B cell (primary cell): ENCODE measurements at regions of chr20 and their contacts with region 1.

Region 1: GRCh38 chr20:45368221-45368980 is 5.4 kb downstream of the SYS1 start:
- DNase-seq: peak; percentile 94
- ATAC-seq: peak; percentile 80
- H3K4me3 ChIP-seq: peak overlapping the region in 3 of 5 experiments; percentile 15 to 46 (median 18)
- H3K4me3 Mint-ChIP-seq: peak overlapping the region; percentile 86
- H3K27ac ChIP-seq: peak overlapping the region; percentile 43 to 94
- H3K27ac Mint-ChIP-seq: peak overlapping the region; percentile 92
- H3K4me1 ChIP-seq: peaks cover 95 to 98% of the 10 kb centered on the region in 2 donors
- H3K4me1 Mint-ChIP-seq: peaks cover 86% of the 10 kb centered on the region
- H3K27me3 ChIP-seq: no peaks in the 10 kb centered on the region
- H3K27me3 Mint-ChIP-seq: no peaks in the 10 kb centered on the region
- CTCF ChIP-seq: peak; percentile 28

Region 2: GRCh38 chr20:45187662-45188061 is 180.7 kb before region 1 on chr20:
- CTCF ChIA-PET with region 1: no interaction called
- POLR2A ChIA-PET with region 1: no interaction called
- intact Hi-C with region 1: no loop called
- DNase-seq: no peak
- ATAC-seq: no peak
- H3K4me3 ChIP-seq: no peak overlapping the region
- H3K4me3 Mint-ChIP-seq: no peak overlapping the region
- H3K27ac ChIP-seq: no peak overlapping the region
- H3K27ac Mint-ChIP-seq: no peak overlapping the region
- H3K4me1 ChIP-seq: no peaks in the 10 kb centered on the region
- H3K4me1 Mint-ChIP-seq: no peaks in the 10 kb centered on the region
- H3K27me3 ChIP-seq: peaks cover 0 to 7% (median 0%) of the 10 kb centered on the region in 4 experiments
- H3K27me3 Mint-ChIP-seq: peaks cover 23% of the 10 kb centered on the region
- CTCF ChIP-seq: no peak

Region 3: DNA sequence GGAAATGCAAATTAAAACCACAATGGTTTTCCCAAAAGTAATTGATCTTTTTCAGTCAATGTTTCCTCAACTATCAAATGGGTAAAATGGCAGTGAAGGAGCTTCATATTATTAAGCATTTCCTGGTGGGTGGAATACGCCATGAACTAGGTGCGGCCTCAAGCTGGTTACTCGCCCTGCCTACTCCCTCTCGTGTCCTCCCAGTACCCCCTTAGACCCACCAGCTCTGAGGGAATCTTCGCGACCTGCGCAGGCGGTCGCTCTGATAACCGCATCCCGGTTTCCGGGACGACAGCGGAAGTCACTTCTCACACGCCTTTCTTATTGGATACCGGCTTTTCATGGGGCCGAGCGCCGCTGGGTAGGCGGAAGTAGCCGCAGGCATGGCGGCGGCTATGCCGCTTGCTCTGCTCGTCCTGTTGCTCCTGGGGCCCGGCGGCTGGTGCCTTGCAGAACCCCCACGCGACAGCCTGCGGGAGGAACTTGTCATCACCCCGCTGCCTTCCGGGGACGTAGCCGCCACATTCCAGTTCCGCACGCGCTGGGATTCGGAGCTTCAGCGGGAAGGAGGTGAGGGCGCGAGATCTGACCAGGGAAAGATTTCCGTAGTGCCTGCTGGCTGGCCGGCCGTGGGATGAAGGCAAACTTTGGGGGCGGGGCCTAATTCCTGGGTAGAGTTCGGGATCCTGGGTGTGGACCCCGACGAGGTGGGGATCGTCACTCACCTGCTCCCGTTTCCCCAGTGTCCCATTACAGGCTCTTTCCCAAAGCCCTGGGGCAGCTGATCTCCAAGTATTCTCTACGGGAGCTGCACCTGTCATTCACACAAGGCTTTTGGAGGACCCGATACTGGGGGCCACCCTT is 47.6 kb after region 1 on chr20 and contains the start of gene PIGT:
- CTCF ChIA-PET with region 1: interaction called, 35 read pairs
- POLR2A ChIA-PET with region 1: interaction called, 21 read pairs
- intact Hi-C with region 1: loop called (anchors 1 kb)
- DNase-seq: peak; percentile 95
- ATAC-seq: peak; percentile 75
- H3K4me3 ChIP-seq: peak within 1 kb of the TSS; percentile 80 to 97 (median 97)
- H3K4me3 Mint-ChIP-seq: peak within 1 kb of the TSS; percentile 99
- H3K27ac ChIP-seq: peak within 1 kb of the TSS; percentile 81 to 90
- H3K27ac Mint-ChIP-seq: peak within 1 kb of the TSS; percentile 100
- H3K4me1 ChIP-seq: peaks cover 30 to 38% of the 10 kb centered on the region in 2 donors
- H3K4me1 Mint-ChIP-seq: peaks cover 53% of the 10 kb centered on the region
- H3K27me3 ChIP-seq: no peaks in the 10 kb centered on the region
- H3K27me3 Mint-ChIP-seq: no peaks in the 10 kb centered on the region
- CTCF ChIP-seq: no peak
- total RNA-seq, gene PIGT: 106 and 110 TPM in 2 replicates

Region 4: DNA sequence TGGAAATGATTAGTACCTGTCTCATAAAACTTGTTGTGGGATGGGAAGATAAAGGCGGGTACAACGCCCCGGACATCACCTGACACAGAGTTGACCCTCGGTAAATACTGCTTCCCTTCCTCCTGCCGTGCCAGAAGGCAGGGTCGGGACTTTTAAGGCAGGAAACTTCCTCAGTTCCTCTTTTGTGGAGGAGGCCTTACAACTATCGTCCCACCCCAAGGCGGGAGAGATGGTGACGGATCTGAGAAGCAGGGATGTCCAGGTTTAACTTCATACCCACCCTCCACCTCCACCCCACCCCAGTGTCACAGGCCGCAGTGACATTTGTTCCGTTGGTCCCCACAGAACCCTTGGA is 423.9 kb after region 1 on chr20:
- CTCF ChIA-PET with region 1: no interaction called
- POLR2A ChIA-PET with region 1: no interaction called
- intact Hi-C with region 1: loop called (anchors 5 kb)
- DNase-seq: peak; percentile 61
- ATAC-seq: peak; percentile 22
- H3K4me3 ChIP-seq: peak overlapping the region; percentile 72 to 95 (median 89)
- H3K4me3 Mint-ChIP-seq: peak overlapping the region; percentile 90
- H3K27ac ChIP-seq: peak overlapping the region; percentile 75 to 96
- H3K27ac Mint-ChIP-seq: peak overlapping the region; percentile 93
- H3K4me1 ChIP-seq: peaks cover 8 to 13% of the 10 kb centered on the region in 2 donors
- H3K4me1 Mint-ChIP-seq: peaks cover 19% of the 10 kb centered on the region
- H3K27me3 ChIP-seq: no peaks in the 10 kb centered on the region
- H3K27me3 Mint-ChIP-seq: no peaks in the 10 kb centered on the region
- CTCF ChIP-seq: no peak